ENCODE measurements at regions of chr15 and their contacts with region 1.

Region 1: DNA sequence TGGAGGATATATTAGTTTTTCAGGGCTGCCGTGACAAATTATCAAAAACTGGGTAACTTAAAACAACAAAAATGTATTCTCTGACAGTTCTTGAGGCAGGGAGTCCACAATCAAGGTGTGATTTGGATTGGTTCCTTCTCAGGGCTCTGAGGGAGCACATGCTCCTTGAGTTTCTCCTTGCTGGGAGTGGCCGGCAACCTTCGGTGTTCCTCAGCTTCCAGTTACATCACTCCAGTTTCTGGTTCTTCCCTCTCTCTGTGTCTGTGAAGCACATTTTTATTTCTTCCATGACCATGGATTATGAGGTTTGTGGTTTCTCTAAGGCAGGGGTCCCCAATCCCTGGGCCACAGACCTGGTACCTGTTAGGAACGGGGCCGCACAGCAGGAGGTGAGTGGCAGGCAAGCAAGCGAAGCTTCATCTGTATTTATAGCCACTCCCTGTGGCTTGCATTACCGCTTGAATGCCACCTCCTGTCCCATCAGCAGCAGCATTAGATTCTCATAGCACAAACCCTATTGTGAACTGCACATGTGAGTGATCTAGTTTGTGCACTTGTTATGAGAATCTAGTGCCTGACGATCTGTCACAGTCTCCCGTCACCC is 24.3 kb downstream of the LRRC28 start:
- DNase-seq: no peak
- H3K4me3 ChIP-seq: no peak overlapping the region
- H3K4me3 Mint-ChIP-seq: no peak overlapping the region
- H3K27ac ChIP-seq: no peak overlapping the region
- H3K27ac Mint-ChIP-seq: no peak overlapping the region
- H3K4me1 ChIP-seq: no peaks in the 10 kb centered on the region
- H3K4me1 Mint-ChIP-seq: peaks cover 7 to 14% (median 13%) of the 10 kb centered on the region in 4 donors
- H3K27me3 ChIP-seq: no peaks in the 10 kb centered on the region
- H3K27me3 Mint-ChIP-seq: no peaks in the 10 kb centered on the region

Region 2: DNA sequence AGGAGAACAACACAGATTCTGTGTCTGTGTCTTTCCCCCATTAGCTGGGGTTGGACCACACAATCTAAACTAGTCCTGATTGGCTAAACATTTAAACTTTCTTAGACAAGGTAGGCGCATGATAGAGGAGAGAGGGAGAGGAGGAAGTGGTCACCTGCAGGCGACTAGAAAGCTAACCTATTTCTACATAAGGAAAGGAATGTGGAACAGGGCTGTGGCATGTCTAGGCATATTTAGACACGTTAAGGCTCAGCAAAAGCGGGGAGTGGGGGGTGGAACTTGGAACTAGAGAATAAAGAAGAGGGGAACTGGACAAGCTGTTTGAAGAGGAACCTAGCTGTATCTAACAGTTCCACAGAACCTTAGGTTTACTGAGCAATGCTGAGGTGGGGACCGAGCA is 11.5 kb before region 1 on chr15:
- CTCF ChIA-PET with region 1: interaction called, 33 read pairs
- POLR2A ChIA-PET with region 1: no interaction called
- intact Hi-C with region 1: no loop called
- DNase-seq: no peak
- H3K4me3 ChIP-seq: no peak overlapping the region
- H3K4me3 Mint-ChIP-seq: no peak overlapping the region
- H3K27ac ChIP-seq: no peak overlapping the region
- H3K27ac Mint-ChIP-seq: peak overlapping the region in 1 of 7 donors; percentile 37
- H3K4me1 ChIP-seq: no peaks in the 10 kb centered on the region
- H3K4me1 Mint-ChIP-seq: peaks cover 0 to 5% (median 2%) of the 10 kb centered on the region in 4 donors
- H3K27me3 ChIP-seq: no peaks in the 10 kb centered on the region
- H3K27me3 Mint-ChIP-seq: no peaks in the 10 kb centered on the region

Measured in CD4-positive, alpha-beta memory T cell (primary cell).